ENCODE measurements at regions of chr3 and their contacts with region 1.

Region 1: DNA sequence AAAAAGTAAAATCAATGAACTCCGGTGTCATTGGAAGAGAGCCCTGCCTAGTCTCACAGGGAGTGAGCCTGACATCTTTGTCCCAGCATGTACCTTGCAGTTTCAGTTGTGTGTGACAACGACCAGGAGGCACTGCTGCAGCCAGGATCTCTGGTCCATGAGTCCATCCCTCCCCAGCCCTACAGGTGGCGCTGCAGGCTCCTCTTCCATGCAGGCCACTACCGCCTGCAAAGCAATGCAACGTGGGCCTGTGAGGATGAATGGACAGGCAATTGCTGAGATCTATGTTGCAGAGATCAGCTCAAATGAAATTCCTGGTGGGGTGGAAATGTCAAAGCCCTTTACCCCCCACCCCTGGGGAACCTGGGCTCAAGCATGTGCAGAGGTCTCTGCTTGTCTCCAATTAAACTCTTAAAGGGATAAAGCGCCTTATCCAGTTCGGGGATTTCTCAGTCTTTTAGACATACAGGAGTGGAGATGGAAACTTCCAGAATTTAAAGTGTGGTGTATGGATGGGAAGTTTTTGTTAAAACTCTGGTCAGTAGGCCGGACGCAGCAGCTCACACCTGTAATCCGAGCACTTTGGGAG is 35.8 kb downstream of the TKT start:
- DNase-seq: peak; percentile 91
- H3K4me3 Mint-ChIP-seq: no peak overlapping the region
- H3K27ac Mint-ChIP-seq: no peak overlapping the region
- H3K4me1 Mint-ChIP-seq: no peaks in the 10 kb centered on the region
- H3K27me3 Mint-ChIP-seq: no peaks in the 10 kb centered on the region

Region 2: GRCh38 chr3:52934630-52935530 is 285.1 kb before region 1 on chr3:
- CTCF ChIA-PET with region 1: no interaction called
- POLR2A ChIA-PET with region 1: no interaction called
- intact Hi-C with region 1: no loop called
- DNase-seq: peak; percentile 73
- H3K4me3 Mint-ChIP-seq: no peak overlapping the region
- H3K27ac Mint-ChIP-seq: no peak overlapping the region
- H3K4me1 Mint-ChIP-seq: peaks cover 10% of the 10 kb centered on the region
- H3K27me3 Mint-ChIP-seq: no peaks in the 10 kb centered on the region

Region 3: GRCh38 chr3:53232641-53233377 is 12.8 kb after region 1 on chr3:
- CTCF ChIA-PET with region 1: interaction called, 13 read pairs
- POLR2A ChIA-PET with region 1: no interaction called
- intact Hi-C with region 1: no loop called
- DNase-seq: no peak
- H3K4me3 Mint-ChIP-seq: no peak overlapping the region
- H3K27ac Mint-ChIP-seq: no peak overlapping the region
- H3K4me1 Mint-ChIP-seq: no peaks in the 10 kb centered on the region
- H3K27me3 Mint-ChIP-seq: no peaks in the 10 kb centered on the region

Region 4: DNA sequence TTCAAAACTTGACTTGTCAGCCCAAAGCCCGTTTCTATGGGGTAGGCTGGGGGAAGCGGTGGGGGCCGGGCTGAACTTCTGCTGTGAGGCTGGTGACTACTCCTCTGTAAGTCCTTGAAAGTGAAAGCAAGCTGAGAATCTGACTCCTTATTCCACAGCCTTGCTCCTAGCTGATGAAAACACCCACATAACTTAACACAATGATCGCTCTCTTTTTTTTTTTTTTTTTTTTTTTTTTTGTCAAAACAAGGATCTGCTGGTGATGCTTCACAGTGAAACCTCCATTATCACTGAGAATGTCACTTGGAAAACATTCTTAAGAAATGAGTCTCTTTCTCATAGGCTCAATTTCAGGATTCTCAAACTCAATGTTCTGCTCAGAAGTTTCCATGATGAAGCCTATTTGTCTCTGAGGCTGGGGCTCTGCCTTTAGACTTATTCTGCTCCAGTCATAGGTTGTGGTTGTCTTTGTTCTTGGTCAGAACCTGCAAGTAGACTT is 67.2 kb after region 1 on chr3:
- CTCF ChIA-PET with region 1: no interaction called
- POLR2A ChIA-PET with region 1: no interaction called
- intact Hi-C with region 1: loop called (anchors 5 kb)
- DNase-seq: peak; percentile 34
- H3K4me3 Mint-ChIP-seq: no peak overlapping the region
- H3K27ac Mint-ChIP-seq: peak overlapping the region; percentile 54
- H3K4me1 Mint-ChIP-seq: peaks cover 9% of the 10 kb centered on the region
- H3K27me3 Mint-ChIP-seq: no peaks in the 10 kb centered on the region

Region 5: GRCh38 chr3:53426918-53427317 is 206.9 kb after region 1 on chr3:
- CTCF ChIA-PET with region 1: no interaction called
- POLR2A ChIA-PET with region 1: no interaction called
- intact Hi-C with region 1: no loop called
- DNase-seq: no peak
- H3K4me3 Mint-ChIP-seq: no peak overlapping the region
- H3K27ac Mint-ChIP-seq: no peak overlapping the region
- H3K4me1 Mint-ChIP-seq: no peaks in the 10 kb centered on the region
- H3K27me3 Mint-ChIP-seq: peaks cover 6% of the 10 kb centered on the region

Measured in activated CD4-positive, alpha-beta memory T cell treated with anti-CD3 and anti-CD28 coated beads for 36 hours (primary cell).